ENCODE measurements at regions of chr20 and their contacts with region 1.

Region 1: DNA sequence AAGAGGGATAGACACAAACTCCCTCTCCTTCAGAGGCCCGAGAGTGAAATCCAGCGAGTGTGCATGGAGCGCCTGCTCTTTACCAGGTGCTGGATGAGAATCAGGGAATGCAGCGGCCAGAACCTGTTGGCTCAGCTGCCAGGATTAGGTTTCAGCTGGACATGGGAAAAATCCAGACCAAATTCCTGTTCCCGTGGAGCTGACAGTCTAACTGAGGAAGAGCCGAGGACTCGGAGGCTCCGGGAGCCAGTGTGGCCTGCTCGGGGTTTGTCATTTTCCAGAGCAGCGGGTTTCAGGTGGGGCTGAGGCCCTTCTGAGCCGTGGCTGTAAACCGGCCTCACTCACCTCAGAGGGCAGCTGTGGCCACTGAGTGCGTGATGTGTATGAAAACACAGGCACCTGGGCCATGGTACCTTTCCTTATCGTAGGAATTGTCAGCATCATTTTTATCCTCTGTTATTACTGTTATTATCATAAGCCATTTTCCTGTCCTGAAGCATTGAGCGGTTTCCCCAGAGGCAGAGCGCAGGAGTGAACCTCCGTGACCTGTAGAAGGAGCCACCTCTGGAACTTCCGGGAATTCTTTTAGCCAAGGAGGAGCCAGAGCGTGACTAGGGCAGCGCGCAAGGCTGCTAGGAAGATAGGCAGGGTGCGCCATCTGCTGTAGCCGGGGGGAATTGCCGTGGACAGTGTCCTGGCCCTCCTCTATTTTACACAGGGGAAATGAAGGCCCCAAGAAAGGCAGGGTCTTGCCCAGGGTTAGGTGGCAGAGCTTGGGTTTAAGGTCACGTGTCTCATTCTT is 27.3 kb downstream of the PKIG start:
- DNase-seq: peak; percentile 70 to 82 (median 77)
- ATAC-seq: peak; percentile 91
- H3K4me3 ChIP-seq: peak overlapping the region; percentile 2
- H3K4me3 Mint-ChIP-seq: peak overlapping the region; percentile 30 to 86 (median 74)
- H3K27ac ChIP-seq: peak overlapping the region; percentile 73
- H3K27ac Mint-ChIP-seq: peak overlapping the region; percentile 88 to 100 (median 98)
- H3K4me1 ChIP-seq: peaks cover 8 to 24% of the 10 kb centered on the region in 2 donors
- H3K4me1 Mint-ChIP-seq: peaks cover 14 to 39% (median 25%) of the 10 kb centered on the region in 7 donors
- H3K27me3 ChIP-seq: no peaks in the 10 kb centered on the region
- H3K27me3 Mint-ChIP-seq: no peaks in the 10 kb centered on the region

Region 2: GRCh38 chr20:44115762-44116644 is 493.7 kb before region 1 on chr20:
- CTCF ChIA-PET with region 1: no interaction called
- POLR2A ChIA-PET with region 1: no interaction called
- intact Hi-C with region 1: loop called in 1 of 2 experiments (anchors 1 kb)
- DNase-seq: no peak
- ATAC-seq: no peak
- H3K4me3 ChIP-seq: no peak overlapping the region
- H3K4me3 Mint-ChIP-seq: peak overlapping the region in 1 of 10 donors; percentile 23
- H3K27ac ChIP-seq: no peak overlapping the region
- H3K27ac Mint-ChIP-seq: peak overlapping the region in 1 of 9 donors; percentile 49
- H3K4me1 ChIP-seq: no peaks in the 10 kb centered on the region
- H3K4me1 Mint-ChIP-seq: peaks cover 0 to 16% (median 5%) of the 10 kb centered on the region in 7 donors
- H3K27me3 ChIP-seq: no peaks in the 10 kb centered on the region
- H3K27me3 Mint-ChIP-seq: peaks cover 8 to 34% (median 20%) of the 10 kb centered on the region in 5 donors

Region 3: DNA sequence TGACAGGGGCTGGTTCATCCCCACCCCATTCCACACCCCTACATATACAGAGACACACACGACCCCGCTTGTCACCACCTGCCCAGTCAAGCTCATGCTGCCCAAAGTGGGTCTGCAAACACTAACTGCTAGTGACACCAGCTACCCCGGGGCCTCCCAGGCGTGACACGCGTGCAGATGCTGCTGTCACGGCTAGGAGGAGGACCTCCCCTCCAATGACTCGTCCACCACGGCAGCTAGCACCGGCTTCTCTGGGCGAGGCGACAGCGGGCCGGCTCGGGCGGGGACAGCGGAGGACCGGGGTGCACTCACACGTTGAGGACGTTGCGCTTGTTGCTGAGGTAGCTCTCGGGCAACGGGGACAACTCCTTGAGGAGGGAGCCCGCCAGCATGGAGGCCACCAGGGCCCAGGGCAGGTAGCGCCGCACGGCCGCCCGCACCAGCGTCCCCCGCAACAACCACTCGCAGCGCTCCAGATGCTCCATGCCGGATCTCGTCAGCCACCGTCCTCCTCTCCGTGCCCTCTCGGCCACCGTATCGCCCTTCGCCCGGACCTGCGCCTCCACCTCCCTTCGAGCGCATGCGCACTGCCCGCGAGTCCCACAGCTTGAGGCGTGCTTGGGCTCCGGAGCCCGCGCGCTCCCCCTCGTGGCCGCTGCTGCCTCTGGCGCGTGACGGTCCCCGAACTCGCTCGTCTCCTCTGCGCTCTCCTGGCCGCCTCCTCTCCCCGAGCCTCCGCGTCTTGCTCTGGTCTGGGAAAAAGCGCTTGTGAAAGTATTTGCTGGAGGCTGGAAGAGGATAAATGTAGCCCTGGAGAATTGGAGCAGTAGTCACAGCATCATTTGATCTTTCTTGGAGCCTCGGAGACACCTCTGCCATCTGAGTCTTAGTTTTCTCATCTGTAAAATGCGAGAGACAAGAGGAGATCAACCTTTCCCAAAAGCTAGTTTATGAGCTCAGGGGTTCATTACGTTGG is 298.8 kb before region 1 on chr20 and contains the start of gene FITM2:
- CTCF ChIA-PET with region 1: interaction called, 3 read pairs
- POLR2A ChIA-PET with region 1: interaction called, 3 read pairs
- intact Hi-C with region 1: loop called in 1 of 2 experiments (anchors 1 kb)
- DNase-seq: peak; percentile 96 to 99 (median 98)
- ATAC-seq: peak; percentile 99
- H3K4me3 ChIP-seq: peak within 1 kb of the TSS; percentile 98
- H3K4me3 Mint-ChIP-seq: peak within 1 kb of the TSS; percentile 87 to 97 (median 95)
- H3K27ac ChIP-seq: peak within 1 kb of the TSS; percentile 82
- H3K27ac Mint-ChIP-seq: peak within 1 kb of the TSS; percentile 91 to 98 (median 93)
- H3K4me1 ChIP-seq: peaks cover 12 to 18% of the 10 kb centered on the region in 2 donors
- H3K4me1 Mint-ChIP-seq: peaks cover 15 to 35% (median 28%) of the 10 kb centered on the region in 7 donors
- H3K27me3 ChIP-seq: no peaks in the 10 kb centered on the region
- H3K27me3 Mint-ChIP-seq: peaks cover 0 to 8% (median 0%) of the 10 kb centered on the region in 5 donors
- total RNA-seq, gene FITM2: 3.1 to 7.9 (median 5.0) TPM

Region 4: GRCh38 chr20:44475694-44476560 is 133.8 kb before region 1 on chr20 and contains the start of gene TTPAL:
- CTCF ChIA-PET with region 1: interaction called, 5 read pairs
- POLR2A ChIA-PET with region 1: no interaction called
- intact Hi-C with region 1: loop called (anchors 1 kb)
- DNase-seq: peak; percentile 83 to 95 (median 89)
- ATAC-seq: peak; percentile 98
- H3K4me3 ChIP-seq: peak within 1 kb of the TSS; percentile 65
- H3K4me3 Mint-ChIP-seq: peak within 1 kb of the TSS; percentile 87 to 96 (median 91)
- H3K27ac ChIP-seq: peak within 1 kb of the TSS; percentile 97
- H3K27ac Mint-ChIP-seq: peak within 1 kb of the TSS; percentile 86 to 97 (median 94)
- H3K4me1 ChIP-seq: peaks cover 12 to 17% of the 10 kb centered on the region in 2 donors
- H3K4me1 Mint-ChIP-seq: peaks cover 14 to 43% (median 31%) of the 10 kb centered on the region in 7 donors
- H3K27me3 ChIP-seq: no peaks in the 10 kb centered on the region
- H3K27me3 Mint-ChIP-seq: no peaks in the 10 kb centered on the region
- total RNA-seq, gene TTPAL: 12.0 to 20.7 (median 17.0) TPM

Region 5: GRCh38 chr20:44576297-44576696 is 33.4 kb before region 1 on chr20:
- CTCF ChIA-PET with region 1: interaction called, 3 read pairs
- POLR2A ChIA-PET with region 1: no interaction called
- intact Hi-C with region 1: loop called in 1 of 2 experiments (anchors 1 kb)
- DNase-seq: peak in 3 of 9 donors; percentile 3 to 27 (median 4)
- ATAC-seq: peak; percentile 69
- H3K4me3 ChIP-seq: no peak overlapping the region
- H3K4me3 Mint-ChIP-seq: no peak overlapping the region
- H3K27ac ChIP-seq: no peak overlapping the region
- H3K27ac Mint-ChIP-seq: peak overlapping the region in 3 of 9 donors; percentile 6 to 68 (median 51)
- H3K4me1 ChIP-seq: peaks cover 0 to 4% of the 10 kb centered on the region in 2 donors
- H3K4me1 Mint-ChIP-seq: peaks cover 0 to 30% (median 11%) of the 10 kb centered on the region in 7 donors
- H3K27me3 ChIP-seq: no peaks in the 10 kb centered on the region
- H3K27me3 Mint-ChIP-seq: no peaks in the 10 kb centered on the region

Region 6: DNA sequence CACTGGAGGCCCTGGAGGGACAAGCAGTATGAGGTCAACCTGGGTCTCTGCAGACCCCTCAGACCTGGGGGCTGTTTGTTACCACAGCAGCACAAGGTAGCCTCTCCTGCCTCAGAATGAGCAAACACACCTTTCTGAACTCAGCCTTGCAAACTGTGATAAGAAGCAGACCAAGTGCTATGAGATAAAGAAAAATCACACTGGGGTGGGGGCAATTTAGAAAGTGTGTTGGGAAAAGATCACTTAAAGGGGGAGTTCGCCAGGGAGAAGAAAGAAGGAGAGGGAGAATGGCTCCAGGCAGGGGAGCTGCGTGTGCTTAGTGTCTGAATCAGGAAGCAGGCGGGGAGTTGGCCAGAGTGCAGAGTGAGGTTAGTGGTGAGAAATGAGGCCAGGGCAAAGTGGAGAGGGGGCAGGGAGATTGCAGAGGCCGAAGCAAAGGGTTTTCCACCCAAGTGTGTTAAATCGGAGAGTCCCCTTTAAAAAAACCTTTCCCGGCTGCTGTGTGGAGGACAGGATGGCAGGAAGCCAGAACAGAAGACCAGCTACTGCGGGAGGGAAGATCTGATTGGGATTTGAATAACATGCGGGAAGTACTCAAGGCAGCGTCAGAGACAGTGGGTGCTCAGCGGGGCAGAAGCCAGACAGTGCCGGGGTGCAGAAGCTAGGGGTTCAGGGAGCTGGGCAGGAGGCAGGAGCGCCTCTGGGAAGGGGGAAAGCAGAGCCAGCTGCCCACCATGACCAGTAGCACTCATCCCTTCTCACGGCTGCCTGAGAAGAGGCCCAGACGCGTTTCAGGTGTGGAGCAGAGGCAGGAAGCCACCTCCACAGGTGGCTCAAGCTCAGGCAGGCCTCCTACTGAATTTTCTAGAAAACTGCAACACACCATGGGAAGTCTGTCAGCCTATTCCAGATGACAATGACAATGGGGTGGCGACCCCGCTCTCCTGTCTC is 32.8 kb after region 1 on chr20:
- CTCF ChIA-PET with region 1: interaction called, 4 read pairs
- POLR2A ChIA-PET with region 1: interaction called, 122 read pairs
- intact Hi-C with region 1: loop called in 1 of 2 experiments (anchors 2 kb)
- DNase-seq: peak in 8 of 9 donors; percentile 28 to 54 (median 41)
- ATAC-seq: peak; percentile 33
- H3K4me3 ChIP-seq: peak overlapping the region; percentile 47
- H3K4me3 Mint-ChIP-seq: peak overlapping the region; percentile 63 to 96 (median 76)
- H3K27ac ChIP-seq: peak overlapping the region; percentile 76
- H3K27ac Mint-ChIP-seq: peak overlapping the region; percentile 90 to 98 (median 96)
- H3K4me1 ChIP-seq: peaks cover 53 to 70% of the 10 kb centered on the region in 2 donors
- H3K4me1 Mint-ChIP-seq: peaks cover 55 to 82% (median 70%) of the 10 kb centered on the region in 7 donors
- H3K27me3 ChIP-seq: no peaks in the 10 kb centered on the region
- H3K27me3 Mint-ChIP-seq: no peaks in the 10 kb centered on the region

Region 7: DNA sequence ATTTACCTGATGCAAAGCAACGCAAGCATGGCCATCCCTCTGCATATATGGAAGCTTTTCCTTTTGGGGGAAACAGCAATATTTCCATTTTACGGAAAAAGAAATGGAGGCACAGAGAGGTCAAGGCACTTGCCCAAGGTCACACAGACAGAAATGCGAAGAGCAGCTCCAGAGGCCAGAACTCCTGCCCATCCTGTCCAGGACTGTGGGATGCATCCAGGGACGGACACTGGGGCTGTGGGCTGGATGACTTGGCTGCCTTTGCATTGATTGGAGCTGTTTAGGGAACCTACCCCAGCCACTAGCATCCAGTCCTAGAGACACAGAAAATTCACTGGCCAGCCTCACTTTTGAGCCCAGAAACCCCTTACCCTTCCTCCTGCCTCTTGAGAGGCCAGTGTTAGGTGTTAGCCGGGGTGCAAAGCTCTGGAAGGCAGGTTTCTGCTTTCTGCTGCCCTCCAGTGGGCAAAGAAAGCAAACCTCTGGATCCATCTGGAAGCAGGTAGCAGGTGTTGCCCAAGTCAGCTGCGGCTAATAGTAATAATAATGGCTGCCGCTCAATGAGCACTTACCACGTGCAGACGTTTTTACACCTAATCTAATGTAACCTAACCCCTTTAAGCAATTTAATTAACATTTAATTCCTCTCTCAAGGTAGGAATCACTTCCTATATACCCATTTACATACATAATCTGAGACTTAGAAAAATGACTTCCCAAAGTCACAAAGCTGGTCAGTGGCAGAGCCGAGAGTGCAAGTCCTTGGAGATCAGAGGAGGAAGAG is 73.7 kb after region 1 on chr20:
- CTCF ChIA-PET with region 1: interaction called, 17 read pairs
- POLR2A ChIA-PET with region 1: no interaction called
- intact Hi-C with region 1: loop called in 1 of 2 experiments (anchors 2 kb)
- DNase-seq: peak in 6 of 9 donors; percentile 21 to 68 (median 44)
- ATAC-seq: peak; percentile 77
- H3K4me3 ChIP-seq: no peak overlapping the region
- H3K4me3 Mint-ChIP-seq: no peak overlapping the region
- H3K27ac ChIP-seq: no peak overlapping the region
- H3K27ac Mint-ChIP-seq: peak overlapping the region in 1 of 9 donors; percentile 61
- H3K4me1 ChIP-seq: no peaks in the 10 kb centered on the region
- H3K4me1 Mint-ChIP-seq: peaks cover 5 to 15% (median 9%) of the 10 kb centered on the region in 7 donors
- H3K27me3 ChIP-seq: no peaks in the 10 kb centered on the region
- H3K27me3 Mint-ChIP-seq: peaks cover 0 to 6% (median 0%) of the 10 kb centered on the region in 5 donors

Measured in naive thymus-derived CD4-positive, alpha-beta T cell (primary cell).